Prostate gland (tissue), 2 donors: ENCODE measurements at regions of chr5 and their contacts with region 1.

Region 1: DNA sequence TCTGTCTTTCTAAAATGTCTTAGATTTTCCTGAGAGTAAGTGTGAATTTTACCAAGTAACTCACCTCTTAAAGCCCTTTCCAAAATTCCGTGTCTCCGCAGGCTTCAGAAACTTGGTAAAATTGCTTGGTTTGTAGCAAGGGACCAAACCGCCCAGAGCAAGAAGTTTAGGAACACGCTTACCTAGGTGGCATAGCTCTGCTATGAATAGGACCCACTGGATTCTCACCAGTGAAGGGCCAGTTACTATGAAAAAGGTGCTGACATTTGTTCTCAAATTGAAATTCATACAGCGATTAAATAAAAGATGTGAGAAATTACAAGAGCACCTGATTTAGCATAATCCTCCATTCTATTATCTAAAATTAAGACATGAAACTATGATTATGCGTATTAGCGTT is 6.7 kb downstream of the NME5 start:
- DNase-seq: no peak
- H3K4me3 ChIP-seq: no peak overlapping the region
- H3K27ac ChIP-seq: no peak overlapping the region
- H3K4me1 ChIP-seq: no peaks in the 10 kb centered on the region
- H3K27me3 ChIP-seq: no peaks in the 10 kb centered on the region
- CTCF ChIP-seq: no peak
- POLR2A ChIP-seq: no peak

Region 2: GRCh38 chr5:137594717-137595116 is 537.8 kb before region 1 on chr5:
- intact Hi-C with region 1: no loop called
- DNase-seq: no peak
- H3K4me3 ChIP-seq: no peak overlapping the region
- H3K27ac ChIP-seq: no peak overlapping the region
- H3K4me1 ChIP-seq: no peaks in the 10 kb centered on the region
- H3K27me3 ChIP-seq: no peaks in the 10 kb centered on the region
- CTCF ChIP-seq: no peak
- POLR2A ChIP-seq: no peak

Region 3: DNA sequence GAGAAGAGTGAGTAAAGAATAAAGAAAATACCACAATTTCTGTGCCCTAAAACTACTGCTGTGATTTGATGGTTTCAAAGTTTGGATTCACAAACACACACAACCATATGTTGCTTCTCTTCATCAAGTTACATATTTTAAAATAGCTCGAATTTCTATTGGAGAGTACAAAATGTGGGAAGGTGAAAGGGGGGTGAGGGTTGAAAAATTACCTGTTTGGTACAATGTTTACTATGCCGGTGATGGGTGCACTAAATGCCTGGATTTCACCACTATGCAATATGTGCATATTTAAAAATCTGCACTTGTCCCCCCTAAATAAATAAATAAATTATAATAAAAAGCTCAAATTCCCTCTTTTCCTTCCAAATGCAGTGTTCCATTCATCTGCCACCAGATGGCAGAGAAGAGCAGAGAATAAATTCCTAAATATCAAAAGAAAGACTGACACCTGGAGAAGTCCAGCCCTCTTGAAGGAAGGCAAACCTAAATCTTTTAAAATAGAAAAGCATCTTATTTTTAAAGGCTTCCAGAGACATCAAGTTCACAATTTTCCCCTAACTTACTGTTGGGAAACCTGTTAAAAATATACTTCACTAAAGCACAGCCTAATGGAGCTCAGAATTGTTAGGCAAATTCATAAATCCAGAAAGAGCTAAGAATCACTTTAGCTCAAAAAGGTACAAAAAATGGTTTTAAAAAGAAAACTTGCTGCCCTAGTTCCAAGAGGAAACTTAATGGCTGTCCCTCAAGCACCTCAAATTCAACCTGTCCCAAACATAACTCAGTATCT is 353.6 kb before region 1 on chr5:
- intact Hi-C with region 1: loop called (anchors 5 kb)
- DNase-seq: no peak
- H3K4me3 ChIP-seq: no peak overlapping the region
- H3K27ac ChIP-seq: no peak overlapping the region
- H3K4me1 ChIP-seq: no peaks in the 10 kb centered on the region
- H3K27me3 ChIP-seq: no peaks in the 10 kb centered on the region
- CTCF ChIP-seq: peak in 3 of 4 experiments; percentile 77 to 86 (median 83)
- POLR2A ChIP-seq: no peak

Region 4: DNA sequence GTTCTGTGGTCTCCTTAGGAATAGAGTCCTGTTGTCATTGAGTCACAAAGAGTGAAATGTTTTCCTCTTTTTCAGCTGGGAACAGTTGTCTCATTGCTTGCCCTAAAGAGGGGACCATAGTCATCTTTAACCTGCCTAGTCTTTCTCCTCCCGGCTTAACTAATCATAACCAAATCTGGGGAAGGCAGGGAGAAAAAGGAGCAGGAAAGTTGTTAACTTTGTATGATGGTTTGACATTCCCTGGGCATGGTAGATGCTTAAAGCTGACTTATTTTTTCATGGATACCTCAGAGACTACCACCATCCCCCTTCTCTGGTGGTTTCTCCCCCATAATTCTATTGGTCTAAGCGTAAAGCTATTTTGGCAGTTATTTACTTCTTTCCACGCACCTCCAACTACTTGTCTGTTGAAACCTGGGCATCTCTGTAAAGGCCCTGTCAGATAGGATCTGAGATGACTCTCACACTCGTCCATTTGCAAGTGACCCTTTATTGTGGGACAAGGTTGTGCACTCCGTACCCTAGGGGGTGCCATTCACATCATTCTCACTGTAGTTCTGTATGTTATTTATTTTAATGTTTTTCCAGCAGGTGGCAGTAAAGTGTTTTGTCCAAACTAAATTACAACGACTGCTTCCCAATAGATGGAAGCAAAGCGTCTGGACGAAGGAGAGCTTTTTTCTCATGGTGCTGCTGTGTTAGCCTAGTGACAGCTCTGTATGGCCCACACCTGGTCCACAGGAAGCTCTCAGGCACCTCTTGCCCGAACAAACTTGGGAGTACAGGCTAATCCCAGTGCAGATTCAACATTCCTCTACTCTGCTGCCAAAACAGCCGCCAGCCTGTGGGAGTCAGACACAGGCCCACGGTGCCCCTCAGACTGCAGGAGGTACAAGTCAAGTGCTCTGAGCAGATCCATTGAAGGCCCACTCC is 96.7 kb before region 1 on chr5:
- intact Hi-C with region 1: loop called (anchors 2 kb)
- DNase-seq: peak; percentile 15
- H3K4me3 ChIP-seq: no peak overlapping the region
- H3K27ac ChIP-seq: no peak overlapping the region
- H3K4me1 ChIP-seq: no peaks in the 10 kb centered on the region
- H3K27me3 ChIP-seq: no peaks in the 10 kb centered on the region
- CTCF ChIP-seq: peak; percentile 50 to 85 (median 81)
- POLR2A ChIP-seq: no peak

Region 5: GRCh38 chr5:138077065-138077696 is 55.4 kb before region 1 on chr5:
- intact Hi-C with region 1: loop called (anchors 2 kb)
- DNase-seq: peak; percentile 48
- H3K4me3 ChIP-seq: no peak overlapping the region
- H3K27ac ChIP-seq: no peak overlapping the region
- H3K4me1 ChIP-seq: no peaks in the 10 kb centered on the region
- H3K27me3 ChIP-seq: no peaks in the 10 kb centered on the region
- CTCF ChIP-seq: peak; percentile 60 to 78 (median 72)
- POLR2A ChIP-seq: no peak